Left cardiac atrium (tissue), 4 donors: ENCODE measurements at regions of chr15 and their contacts with region 1.

Region 1: GRCh38 chr15:58770857-58771620 is at the start of gene MINDY2:
- DNase-seq: peak; percentile 99
- ATAC-seq: peak; percentile 97 to 99
- total RNA-seq, gene MINDY2: 28.7 to 35.5 TPM

Region 2: GRCh38 chr15:58749532-58750337 is 21.3 kb before region 1 on chr15 and contains the start of gene ADAM10:
- intact Hi-C with region 1: loop called in 1 of 2 experiments (anchors 2 kb)
- DNase-seq: peak; percentile 99
- ATAC-seq: peak; percentile 97 to 98
- total RNA-seq, gene ADAM10: 79.8 to 84.8 TPM

Region 3: DNA sequence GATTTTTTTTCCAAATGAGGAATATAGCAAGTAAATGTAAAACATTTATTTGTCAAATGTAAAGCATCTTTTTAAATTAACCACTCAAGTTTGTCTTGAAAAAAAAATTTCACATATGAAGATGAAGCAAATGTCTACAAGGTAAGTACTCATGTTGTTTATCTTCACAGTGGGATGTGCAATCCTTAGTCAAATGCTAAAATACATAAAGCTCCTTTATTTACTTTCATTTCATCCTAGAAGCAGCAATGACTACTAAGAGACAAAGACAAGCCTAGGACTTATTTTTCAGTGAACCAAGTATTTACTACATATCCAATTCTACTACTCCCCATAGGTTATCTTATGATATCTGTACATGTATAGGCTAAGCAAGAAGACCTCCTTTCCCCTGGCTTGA is 135.2 kb after region 1 on chr15:
- intact Hi-C with region 1: no loop called
- DNase-seq: no peak
- ATAC-seq: no peak